Uterus (tissue), 4 donors: ENCODE measurements at regions of chr6 and their contacts with region 1.

Region 1: GRCh38 chr6:42043787-42044475 is 6.4 kb upstream of the TAF8 start:
- DNase-seq: peak; percentile 84 to 90
- H3K4me3 ChIP-seq: no peak overlapping the region
- H3K27ac ChIP-seq: peak overlapping the region; percentile 89 to 97
- H3K4me1 ChIP-seq: peaks cover 3 to 31% of the 10 kb centered on the region in 2 donors
- H3K27me3 ChIP-seq: no peaks in the 10 kb centered on the region
- CTCF ChIP-seq: peak; percentile 93 to 99 (median 96)
- POLR2A ChIP-seq: no peak

Region 2: DNA sequence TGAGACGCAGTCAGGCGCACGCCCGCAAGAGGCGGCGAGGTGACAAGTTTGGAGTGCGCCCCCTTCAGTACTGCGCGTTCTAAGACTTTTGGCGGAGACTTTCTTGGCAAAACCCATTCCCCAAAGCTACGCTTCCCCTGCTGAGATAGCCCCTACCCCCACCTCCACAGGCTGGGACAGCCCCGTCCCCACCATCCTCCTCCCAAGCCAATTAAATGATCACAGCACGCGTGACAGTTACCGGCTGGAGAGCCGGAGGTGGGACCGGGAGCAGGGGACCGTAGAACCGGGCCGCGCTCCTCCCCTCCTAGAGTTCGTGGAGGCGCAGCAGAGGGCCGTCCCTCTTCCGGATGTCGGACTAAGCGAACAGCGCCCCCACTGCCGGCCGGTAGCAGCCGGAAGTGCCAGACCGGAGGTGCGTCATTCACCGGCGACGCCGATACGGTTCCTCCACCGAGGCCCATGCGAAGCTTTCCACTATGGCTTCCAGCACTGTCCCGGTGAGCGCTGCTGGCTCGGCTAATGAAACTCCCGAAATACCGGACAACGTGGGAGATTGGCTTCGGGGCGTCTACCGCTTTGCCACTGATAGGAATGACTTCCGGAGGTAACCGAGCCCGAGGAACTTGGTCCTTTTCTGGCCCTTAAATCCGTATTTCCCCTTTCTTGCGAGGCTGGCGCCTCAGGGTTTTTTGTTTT is 256.6 kb before region 1 on chr6 and contains the start of gene TOMM6:
- intact Hi-C with region 1: loop called (anchors 5 kb)
- DNase-seq: peak; percentile 94 to 97
- H3K4me3 ChIP-seq: peak within 1 kb of the TSS; percentile 82
- H3K27ac ChIP-seq: peak within 1 kb of the TSS; percentile 84 to 97
- H3K4me1 ChIP-seq: peaks cover 0 to 12% of the 10 kb centered on the region in 2 donors
- H3K27me3 ChIP-seq: no peaks in the 10 kb centered on the region
- CTCF ChIP-seq: peak; percentile 82 to 96 (median 90)
- POLR2A ChIP-seq: peak; percentile 68 to 84
- total RNA-seq, gene TOMM6: 53.1 to 164 (median 96.0) TPM

Region 3: DNA sequence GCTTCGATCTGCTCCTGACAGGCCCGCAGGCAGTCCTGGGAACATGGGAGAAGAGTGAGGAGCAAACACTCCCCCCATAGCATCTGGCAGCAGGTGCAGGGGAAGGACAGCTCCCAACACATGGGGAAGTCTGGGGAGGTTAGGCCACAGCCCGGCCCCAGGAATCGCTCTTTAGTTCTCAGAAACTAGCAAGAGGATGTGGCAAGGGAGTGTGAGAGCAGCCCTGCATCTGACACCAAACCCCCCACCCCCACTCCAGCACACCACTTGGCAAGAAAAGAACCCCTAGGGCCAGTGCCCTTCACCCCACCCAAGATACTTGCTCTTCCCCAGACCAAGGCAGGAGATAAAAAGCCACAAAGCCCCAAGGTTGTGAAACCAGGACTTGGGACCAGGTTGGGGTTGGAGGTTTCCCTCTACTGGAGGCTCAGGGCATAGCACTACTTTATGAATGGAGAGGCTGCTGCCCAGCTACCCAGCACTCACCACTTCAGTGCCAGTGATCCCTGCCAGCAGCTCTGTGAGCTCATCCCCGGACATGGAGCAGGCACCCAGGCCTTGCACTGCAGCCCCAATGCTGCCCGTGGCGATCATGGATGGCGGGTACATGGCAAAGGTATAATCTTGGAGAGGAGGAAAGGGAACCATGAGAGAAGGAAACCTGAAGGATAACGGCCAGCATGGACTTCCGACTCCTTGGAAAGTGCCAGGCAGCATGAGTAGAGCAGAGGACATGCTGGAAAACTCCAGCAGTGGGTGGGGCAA is 107.7 kb before region 1 on chr6:
- intact Hi-C with region 1: loop called (anchors 10 kb)
- DNase-seq: peak; percentile 39 to 46
- H3K4me3 ChIP-seq: no peak overlapping the region
- H3K27ac ChIP-seq: no peak overlapping the region
- H3K4me1 ChIP-seq: peaks cover 7 to 24% of the 10 kb centered on the region in 2 donors
- H3K27me3 ChIP-seq: no peaks in the 10 kb centered on the region
- CTCF ChIP-seq: peak; percentile 47 to 63 (median 62)
- POLR2A ChIP-seq: no peak

Region 4: GRCh38 chr6:42563697-42564505 is 520.0 kb after region 1 on chr6 and contains the start of gene UBR2:
- intact Hi-C with region 1: no loop called
- DNase-seq: peak; percentile 94 to 99
- H3K4me3 ChIP-seq: peak within 1 kb of the TSS; percentile 92 to 97
- H3K27ac ChIP-seq: peak within 1 kb of the TSS; percentile 95 to 97
- H3K4me1 ChIP-seq: peaks cover 0 to 5% of the 10 kb centered on the region in 2 donors
- H3K27me3 ChIP-seq: no peaks in the 10 kb centered on the region
- CTCF ChIP-seq: peak; percentile 10 to 58 (median 36)
- POLR2A ChIP-seq: peak; percentile 84 to 87
- total RNA-seq, gene UBR2: 13.2 to 44.2 (median 29.5) TPM